PC-9 (cell line): ENCODE measurements at regions of chr7 and their contacts with region 1.

Region 1: GRCh38 chr7:100604028-100604975 is 2.1 kb downstream of the PCOLCE start:
- DNase-seq: peak; percentile 54 to 84
- H3K4me3 ChIP-seq: peak overlapping the region; percentile 75
- H3K27ac ChIP-seq: no peak overlapping the region
- H3K4me1 ChIP-seq: peaks cover 24% of the 10 kb centered on the region
- H3K27me3 ChIP-seq: no peaks in the 10 kb centered on the region
- CTCF ChIP-seq: peak; percentile 72; the same call in 1 of the 2 replicates

Region 2: GRCh38 chr7:100649826-100650547 is 45.7 kb after region 1 on chr7:
- CTCF ChIA-PET with region 1: no interaction called
- POLR2A ChIA-PET with region 1: no interaction called
- intact Hi-C with region 1: no loop called
- DNase-seq: peak; percentile 49 to 80
- H3K4me3 ChIP-seq: no peak overlapping the region
- H3K27ac ChIP-seq: no peak overlapping the region
- H3K4me1 ChIP-seq: peaks cover 17% of the 10 kb centered on the region
- H3K27me3 ChIP-seq: no peaks in the 10 kb centered on the region
- CTCF ChIP-seq: no peak

Region 3: DNA sequence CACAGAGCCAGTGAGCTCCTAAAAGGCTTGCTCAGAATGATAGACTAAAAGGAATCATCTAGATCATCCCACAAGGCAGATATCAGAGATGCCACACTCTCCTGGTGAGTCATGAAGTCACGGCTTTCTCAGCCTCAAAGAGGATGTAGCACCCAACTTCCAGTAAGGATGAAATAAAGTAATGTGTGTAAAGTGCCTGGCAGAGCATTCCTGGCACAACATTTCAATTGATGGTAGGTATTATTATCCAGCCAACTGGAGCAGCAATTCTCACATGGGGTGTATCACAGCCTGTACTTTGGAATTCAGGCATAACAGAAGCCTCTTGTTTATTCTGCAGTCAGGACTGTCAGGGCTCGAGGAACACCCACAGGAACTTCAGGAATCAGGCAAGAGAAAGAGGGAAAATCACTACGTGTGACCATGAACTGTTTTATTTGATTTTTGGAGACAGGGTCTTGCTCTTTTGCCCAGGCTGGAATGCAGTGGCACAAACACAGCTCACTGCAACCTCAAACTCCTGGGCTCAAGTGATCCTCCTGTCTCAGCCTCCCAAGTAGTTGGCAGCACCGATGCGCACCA is 581.0 kb after region 1 on chr7:
- CTCF ChIA-PET with region 1: interaction called, 10 read pairs
- POLR2A ChIA-PET with region 1: no interaction called
- intact Hi-C with region 1: no loop called
- DNase-seq: no peak
- H3K4me3 ChIP-seq: no peak overlapping the region
- H3K27ac ChIP-seq: no peak overlapping the region
- H3K4me1 ChIP-seq: no peaks in the 10 kb centered on the region
- H3K27me3 ChIP-seq: no peaks in the 10 kb centered on the region
- CTCF ChIP-seq: no peak